ENCODE measurements at regions of chr5 and their contacts with region 1.

Region 1: DNA sequence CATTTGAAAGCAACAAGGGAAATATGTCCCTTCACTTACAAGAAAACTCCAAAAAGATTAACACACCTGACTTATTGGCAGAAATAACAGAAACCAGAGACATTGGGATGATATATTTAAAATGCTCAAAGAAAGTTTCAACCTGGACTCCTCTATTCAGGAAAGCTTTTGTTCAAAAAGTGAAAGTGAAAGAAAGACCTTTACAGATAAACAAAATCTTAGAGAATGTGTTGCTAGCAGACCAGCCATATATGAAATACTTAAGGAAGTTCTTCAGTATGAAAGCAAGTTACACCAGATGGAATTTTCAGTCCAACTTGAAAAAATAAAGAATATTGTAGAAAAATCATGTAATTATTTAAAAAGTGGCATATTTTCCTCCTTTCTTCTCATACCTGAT is 1075.1 kb downstream of the NR2F1-AS1 start:
- DNase-seq: no peak
- H3K4me3 ChIP-seq: peak overlapping the region; percentile 33
- H3K27ac ChIP-seq: no peak overlapping the region
- H3K27me3 ChIP-seq: no peaks in the 10 kb centered on the region
- CTCF ChIP-seq: no peak

Region 2: GRCh38 chr5:92518318-92518904 is 12.5 kb after region 1 on chr5:
- CTCF ChIA-PET with region 1: interaction called, 11 read pairs
- POLR2A ChIA-PET with region 1: no interaction called
- DNase-seq: peak; percentile 27
- H3K4me3 ChIP-seq: no peak overlapping the region; the same call in 1 of the 2 replicates
- H3K27ac ChIP-seq: no peak overlapping the region
- H3K27me3 ChIP-seq: no peaks in the 10 kb centered on the region
- CTCF ChIP-seq: peak; percentile 82